PC-3 (cell line): ENCODE measurements at regions of chr2 and their contacts with region 1.

Region 1: DNA sequence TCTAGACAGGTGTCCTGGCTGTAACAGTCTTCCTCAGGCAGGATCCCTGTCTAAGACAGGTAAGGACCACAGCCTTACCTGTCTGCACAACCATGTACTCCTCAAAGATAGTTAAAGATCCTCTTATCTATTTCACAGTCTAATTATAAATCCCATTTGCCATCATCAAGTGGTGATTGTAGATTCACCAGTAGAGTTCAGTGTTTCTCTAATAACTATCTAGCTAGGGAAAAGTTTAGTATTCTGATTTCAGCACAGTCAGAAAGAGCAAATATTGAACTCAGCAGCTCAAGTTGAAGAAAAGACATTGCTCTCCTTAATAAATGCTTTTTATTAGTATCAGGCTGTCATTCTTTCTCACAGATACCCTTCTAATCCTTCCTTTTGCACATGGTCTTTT is 1305.5 kb upstream of the NXPH2 start:
- DNase-seq: peak; percentile 40
- ATAC-seq: peak; percentile 73
- H3K4me3 ChIP-seq: no peak overlapping the region
- H3K27ac ChIP-seq: no peak overlapping the region
- H3K4me1 ChIP-seq: no peaks in the 10 kb centered on the region
- H3K27me3 ChIP-seq: no peaks in the 10 kb centered on the region
- CTCF ChIP-seq: peak; percentile 57

Region 2: GRCh38 chr2:139790807-139791752 is 294.6 kb before region 1 on chr2:
- CTCF ChIA-PET with region 1: no interaction called
- POLR2A ChIA-PET with region 1: no interaction called
- intact Hi-C with region 1: loop called (anchors 10 kb)
- DNase-seq: peak; percentile 69
- ATAC-seq: peak; percentile 87
- H3K4me3 ChIP-seq: no peak overlapping the region
- H3K27ac ChIP-seq: no peak overlapping the region
- H3K4me1 ChIP-seq: no peaks in the 10 kb centered on the region
- H3K27me3 ChIP-seq: no peaks in the 10 kb centered on the region
- CTCF ChIP-seq: peak; percentile 73

Region 3: DNA sequence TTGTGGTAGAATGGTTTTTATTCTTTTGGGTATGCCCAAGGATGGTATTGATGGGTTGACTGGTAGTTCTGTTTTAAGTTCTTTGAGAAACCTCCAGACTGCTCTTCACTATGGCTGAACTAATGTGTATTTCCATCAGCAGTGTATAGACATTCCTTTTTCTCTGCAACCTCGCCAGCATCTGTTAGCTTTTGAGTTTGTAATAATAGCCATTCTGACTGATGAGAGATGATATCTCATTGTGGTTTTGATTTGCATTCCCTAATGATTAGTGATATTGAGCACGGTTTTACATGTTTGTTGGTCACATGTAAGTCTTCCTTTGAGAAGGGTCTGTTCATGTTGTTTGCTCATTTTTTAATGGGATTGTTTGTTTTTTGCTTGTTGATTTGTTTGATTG is 43.2 kb after region 1 on chr2:
- CTCF ChIA-PET with region 1: no interaction called
- POLR2A ChIA-PET with region 1: no interaction called
- intact Hi-C with region 1: no loop called
- DNase-seq: peak; percentile 28
- ATAC-seq: peak; percentile 51; the same call in 1 of the 2 replicates
- H3K4me3 ChIP-seq: no peak overlapping the region
- H3K27ac ChIP-seq: no peak overlapping the region
- H3K4me1 ChIP-seq: no peaks in the 10 kb centered on the region
- H3K27me3 ChIP-seq: no peaks in the 10 kb centered on the region
- CTCF ChIP-seq: no peak

Region 4: DNA sequence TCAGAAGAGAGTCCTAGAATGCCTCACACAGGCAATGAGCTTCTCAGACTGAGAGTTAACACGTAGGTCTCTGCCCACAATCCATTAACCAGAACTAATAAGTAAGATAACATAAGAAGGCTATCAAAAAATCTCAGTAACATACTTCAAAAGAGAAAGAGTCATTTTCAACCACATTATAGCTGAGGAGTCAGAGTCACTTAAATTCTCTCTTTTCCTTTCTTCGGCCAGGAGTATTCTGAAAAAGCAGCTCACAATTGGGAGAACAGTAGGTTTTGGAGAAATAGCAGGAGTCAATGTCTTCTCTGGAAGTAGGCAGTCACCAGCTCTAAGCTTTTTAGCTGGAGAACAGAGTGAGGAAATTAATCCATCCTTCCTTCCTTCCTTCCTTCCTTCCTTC is 58.9 kb after region 1 on chr2:
- CTCF ChIA-PET with region 1: no interaction called
- POLR2A ChIA-PET with region 1: no interaction called
- intact Hi-C with region 1: no loop called
- DNase-seq: no peak
- ATAC-seq: no peak
- H3K4me3 ChIP-seq: no peak overlapping the region
- H3K27ac ChIP-seq: no peak overlapping the region
- H3K4me1 ChIP-seq: no peaks in the 10 kb centered on the region
- H3K27me3 ChIP-seq: no peaks in the 10 kb centered on the region
- CTCF ChIP-seq: no peak

Region 5: GRCh38 chr2:140344842-140345241 is 259.2 kb after region 1 on chr2:
- CTCF ChIA-PET with region 1: interaction called, 5 read pairs
- POLR2A ChIA-PET with region 1: no interaction called
- intact Hi-C with region 1: loop called (anchors 1 kb)
- DNase-seq: peak; percentile 90
- ATAC-seq: peak; percentile 88
- H3K4me3 ChIP-seq: peak overlapping the region; percentile 58; the same call in 1 of the 2 replicates
- H3K27ac ChIP-seq: peak overlapping the region; percentile 93
- H3K4me1 ChIP-seq: peaks cover 18% of the 10 kb centered on the region
- H3K27me3 ChIP-seq: no peaks in the 10 kb centered on the region
- CTCF ChIP-seq: no peak

Region 6: DNA sequence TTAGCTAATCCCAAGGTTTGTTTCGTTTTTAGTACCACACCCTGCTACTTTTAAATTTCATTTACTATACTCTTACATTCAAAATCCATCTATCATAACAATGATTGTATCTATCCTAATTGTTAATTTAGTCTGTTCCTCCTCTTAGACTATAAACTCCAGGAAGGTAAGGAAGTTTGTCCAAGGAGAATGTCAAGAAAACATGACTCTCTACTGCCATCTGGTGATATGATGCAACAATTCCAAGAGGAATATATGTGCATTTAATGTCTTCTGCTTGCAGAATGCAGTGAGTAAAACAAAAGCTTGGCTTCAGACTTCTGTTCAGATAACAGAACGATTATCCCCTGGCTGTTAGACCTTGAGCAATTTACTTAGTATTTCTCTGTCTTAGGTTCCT is 778.0 kb after region 1 on chr2:
- CTCF ChIA-PET with region 1: interaction called, 5 read pairs
- POLR2A ChIA-PET with region 1: no interaction called
- intact Hi-C with region 1: loop called (anchors 2 kb)
- DNase-seq: peak; percentile 76
- ATAC-seq: peak; percentile 48
- H3K4me3 ChIP-seq: no peak overlapping the region
- H3K27ac ChIP-seq: no peak overlapping the region
- H3K4me1 ChIP-seq: no peaks in the 10 kb centered on the region
- H3K27me3 ChIP-seq: no peaks in the 10 kb centered on the region
- CTCF ChIP-seq: peak; percentile 74